WTC11 (cell line): ENCODE measurements at regions of chr11 and their contacts with region 1.

Region 1: GRCh38 chr11:44823006-44823405 is 96.2 kb downstream of the TSPAN18 start:
- DNase-seq: peak; percentile 51
- ATAC-seq: peak; percentile 18
- H3K4me3 Mint-ChIP-seq: no peak overlapping the region
- H3K27ac Mint-ChIP-seq: no peak overlapping the region
- H3K4me1 Mint-ChIP-seq: peaks cover 41% of the 10 kb centered on the region
- H3K27me3 Mint-ChIP-seq: peaks cover 23% of the 10 kb centered on the region
- CTCF ChIP-seq: no peak

Region 2: DNA sequence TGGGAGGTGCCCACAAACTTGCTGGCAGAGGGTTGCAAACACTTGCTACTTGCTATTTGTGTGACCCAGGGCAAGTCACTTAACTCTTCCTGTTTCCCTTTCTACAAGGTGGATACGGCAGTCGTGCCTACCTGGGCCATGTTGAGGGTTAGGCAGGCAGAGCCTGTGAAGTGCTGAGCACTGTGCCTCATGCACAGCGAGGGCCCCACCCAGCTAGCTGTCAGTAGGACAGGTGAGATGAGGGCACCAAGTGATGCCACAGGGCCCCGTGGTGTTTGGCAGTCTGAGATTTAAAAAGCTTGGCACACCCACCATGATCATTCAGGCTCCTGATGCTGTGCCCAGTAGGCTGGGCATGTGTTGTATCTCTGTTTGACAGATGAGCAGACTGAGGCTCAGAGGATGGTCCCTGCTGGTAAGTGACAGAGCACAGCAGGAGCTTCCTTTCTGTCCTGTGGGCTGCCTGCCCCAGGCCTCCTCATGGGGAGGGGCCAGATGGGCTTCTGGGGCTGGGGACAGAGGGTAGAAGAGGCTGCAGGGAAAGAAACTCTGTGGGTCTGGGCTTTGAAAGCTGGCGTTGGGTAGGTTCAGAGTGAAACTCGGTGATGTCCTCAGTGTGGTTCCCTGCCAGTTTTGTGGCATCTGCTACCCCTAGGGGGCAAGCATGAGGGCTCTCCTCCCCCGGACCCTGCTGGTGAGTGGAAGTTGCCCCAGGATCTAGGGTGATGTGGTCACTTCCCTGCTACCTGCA is 37.0 kb before region 1 on chr11:
- CTCF ChIA-PET with region 1: interaction called, 12 read pairs
- POLR2A ChIA-PET with region 1: interaction called, 6 read pairs
- DNase-seq: peak; percentile 34
- ATAC-seq: peak; percentile 63
- H3K4me3 Mint-ChIP-seq: no peak overlapping the region
- H3K27ac Mint-ChIP-seq: 0 out of 2 replicates have a peak overlapping the region, but pooled peaks have one; percentile 7
- H3K4me1 Mint-ChIP-seq: peaks cover 62% of the 10 kb centered on the region
- H3K27me3 Mint-ChIP-seq: no peaks in the 10 kb centered on the region
- CTCF ChIP-seq: no peak

Region 3: DNA sequence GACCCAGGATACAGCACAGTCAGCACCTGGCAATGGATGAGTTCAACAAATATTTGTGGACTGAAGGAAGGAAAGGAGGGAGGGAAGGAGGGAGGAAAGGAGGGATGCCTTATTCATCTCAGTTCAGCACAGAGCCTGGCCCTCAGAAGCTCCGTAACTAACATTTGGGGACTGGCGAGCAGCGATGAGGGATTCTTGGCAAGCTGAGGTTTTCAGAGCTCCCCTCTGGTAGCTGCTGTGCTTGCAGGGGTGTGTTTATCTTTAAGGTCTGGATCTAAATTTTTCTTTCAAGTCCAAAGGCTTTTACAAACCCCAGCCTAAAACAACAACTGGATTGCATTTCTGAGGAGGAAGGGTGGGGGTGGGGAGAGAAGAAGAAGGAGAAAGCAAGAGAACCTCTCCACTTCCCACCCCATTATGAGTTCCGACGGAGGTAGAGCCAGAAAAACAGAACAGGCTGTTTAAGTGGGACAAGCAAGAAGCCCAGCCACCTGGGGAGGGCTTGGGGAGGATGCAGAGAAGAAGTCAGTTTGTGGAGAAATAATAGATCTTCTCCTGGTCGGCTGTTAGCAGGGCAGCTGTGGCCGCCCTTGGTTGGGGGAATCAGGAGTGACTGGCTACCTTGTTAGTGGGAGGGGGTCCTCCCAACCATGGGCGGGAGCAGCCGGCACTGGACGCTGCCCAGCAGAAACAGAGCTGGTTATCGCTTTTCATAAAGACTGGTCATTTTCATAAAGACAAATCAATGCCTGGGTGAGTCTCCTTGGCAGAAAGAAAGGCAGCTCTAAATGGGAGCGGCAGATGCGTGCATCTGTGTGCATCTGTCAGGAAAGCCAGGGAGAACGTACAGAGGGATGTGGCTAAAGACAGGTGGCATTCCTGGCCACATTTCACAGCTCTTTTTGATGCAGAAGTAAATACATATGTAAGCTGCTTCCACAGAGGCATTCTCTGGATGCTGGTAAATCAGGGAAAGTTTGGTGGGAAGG is 18.3 kb before region 1 on chr11:
- CTCF ChIA-PET with region 1: interaction called, 15 read pairs
- POLR2A ChIA-PET with region 1: no interaction called
- DNase-seq: no peak
- ATAC-seq: peak; percentile 39; the same call in 1 of the 2 replicates
- H3K4me3 Mint-ChIP-seq: no peak overlapping the region; the same call in 1 of the 2 replicates
- H3K27ac Mint-ChIP-seq: peak overlapping the region; percentile 14; the same call in 1 of the 2 replicates
- H3K4me1 Mint-ChIP-seq: peaks cover 54% of the 10 kb centered on the region
- H3K27me3 Mint-ChIP-seq: no peaks in the 10 kb centered on the region
- CTCF ChIP-seq: no peak

Region 4: GRCh38 chr11:44861849-44862749 is 39.1 kb after region 1 on chr11:
- CTCF ChIA-PET with region 1: interaction called, 17 read pairs
- POLR2A ChIA-PET with region 1: interaction called, 9 read pairs
- DNase-seq: peak; percentile 52
- ATAC-seq: peak; percentile 84
- H3K4me3 Mint-ChIP-seq: no peak overlapping the region
- H3K27ac Mint-ChIP-seq: peak overlapping the region; percentile 17
- H3K4me1 Mint-ChIP-seq: peaks cover 75% of the 10 kb centered on the region
- H3K27me3 Mint-ChIP-seq: no peaks in the 10 kb centered on the region
- CTCF ChIP-seq: no peak

Region 5: GRCh38 chr11:44893846-44894617 is 71.0 kb after region 1 on chr11:
- CTCF ChIA-PET with region 1: interaction called, 13 read pairs
- POLR2A ChIA-PET with region 1: no interaction called
- DNase-seq: peak; percentile 92
- ATAC-seq: peak; percentile 93
- H3K4me3 Mint-ChIP-seq: no peak overlapping the region
- H3K27ac Mint-ChIP-seq: no peak overlapping the region
- H3K4me1 Mint-ChIP-seq: peaks cover 31% of the 10 kb centered on the region
- H3K27me3 Mint-ChIP-seq: no peaks in the 10 kb centered on the region
- CTCF ChIP-seq: peak; percentile 95